CD4-positive, alpha-beta memory T cell (primary cell): ENCODE measurements at regions of chr7 and their contacts with region 1.

Region 1: DNA sequence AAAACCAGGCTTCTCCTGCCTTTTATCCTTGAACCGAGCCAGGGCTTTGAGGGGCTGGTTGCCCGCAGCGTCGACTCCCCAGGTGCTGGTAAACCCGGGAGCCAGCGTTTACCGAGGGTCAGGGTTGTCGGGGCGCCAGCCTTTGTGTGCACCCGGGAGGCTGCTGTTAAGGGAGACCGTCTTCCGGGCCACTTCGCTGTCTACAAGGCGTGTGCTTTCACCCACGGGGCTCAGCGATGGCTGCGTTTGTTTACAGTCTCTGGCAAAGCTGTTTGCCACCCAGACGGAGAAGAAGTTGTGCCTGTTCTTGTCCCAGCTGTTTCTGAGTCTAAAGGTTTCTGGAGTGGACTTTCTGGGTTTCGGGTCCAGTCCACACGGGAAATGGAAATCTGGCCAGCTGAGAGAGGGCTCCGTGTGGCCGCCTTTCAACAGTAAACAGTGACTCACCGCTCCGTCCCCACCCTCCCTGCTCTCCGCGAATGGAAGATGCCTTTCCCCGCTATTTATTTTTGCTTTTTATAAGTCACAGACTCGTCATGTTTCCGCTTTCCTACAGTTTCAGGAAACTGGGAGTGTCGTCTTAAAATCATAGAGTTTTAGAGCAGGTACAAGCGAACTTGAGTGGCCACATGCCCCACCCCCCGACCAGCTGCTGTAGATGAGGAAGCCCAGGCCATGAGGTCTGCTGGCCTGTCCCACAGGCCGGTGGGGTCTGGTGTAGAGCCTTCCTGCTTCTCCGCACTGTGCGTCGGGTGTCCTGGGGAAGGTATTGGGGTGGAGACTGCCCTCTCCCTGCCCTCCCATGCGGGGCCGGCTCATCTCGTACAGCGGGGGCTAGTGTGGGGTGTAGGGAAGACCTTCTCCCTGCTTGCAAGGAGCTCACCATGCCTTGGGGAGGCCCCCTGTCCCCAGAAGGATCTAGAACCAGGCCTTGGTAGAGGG is 2.3 kb downstream of the MAFK start:
- DNase-seq: peak; percentile 51 to 85 (median 57)
- H3K4me3 ChIP-seq: peak overlapping the region; percentile 42 to 74
- H3K4me3 Mint-ChIP-seq: peak overlapping the region; percentile 89 to 94 (median 89)
- H3K27ac ChIP-seq: peak overlapping the region; percentile 77
- H3K27ac Mint-ChIP-seq: peak overlapping the region; percentile 95 to 98 (median 96)
- H3K4me1 ChIP-seq: peaks cover 38% of the 10 kb centered on the region
- H3K4me1 Mint-ChIP-seq: peaks cover 12 to 42% (median 27%) of the 10 kb centered on the region in 4 donors
- H3K27me3 ChIP-seq: no peaks in the 10 kb centered on the region
- H3K27me3 Mint-ChIP-seq: no peaks in the 10 kb centered on the region

Region 2: DNA sequence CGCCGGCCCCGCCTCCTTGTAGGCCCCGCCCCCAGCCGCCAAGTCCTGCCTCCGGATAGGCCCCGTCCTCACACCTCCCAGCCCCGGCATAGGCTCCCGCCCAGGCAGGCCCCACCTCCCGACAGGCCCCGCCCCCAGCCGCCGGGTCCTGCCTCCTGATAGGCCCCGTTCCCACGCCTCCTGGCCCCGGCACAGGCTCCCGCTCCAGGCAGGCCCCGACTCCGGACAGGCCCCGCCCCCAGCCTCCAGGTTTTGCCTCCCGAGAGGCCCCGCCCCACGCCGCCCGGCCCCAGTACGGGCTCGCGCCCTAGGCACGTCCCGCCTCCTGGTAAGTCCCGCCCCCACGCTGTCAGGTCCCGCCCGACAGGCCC is 73.2 kb before region 1 on chr7:
- CTCF ChIA-PET with region 1: no interaction called
- POLR2A ChIA-PET with region 1: interaction called, 3 read pairs
- intact Hi-C with region 1: loop called (anchors 1 kb)
- DNase-seq: peak; percentile 98 to 99 (median 98)
- H3K4me3 ChIP-seq: peak overlapping the region in 1 of 2 donors; percentile 75
- H3K4me3 Mint-ChIP-seq: peak overlapping the region in 7 of 8 donors; percentile 62 to 81 (median 76)
- H3K27ac ChIP-seq: peak overlapping the region; percentile 34
- H3K27ac Mint-ChIP-seq: peak overlapping the region in 2 of 7 donors; percentile 35 to 63
- H3K4me1 ChIP-seq: peaks cover 28% of the 10 kb centered on the region
- H3K4me1 Mint-ChIP-seq: peaks cover 9 to 38% (median 16%) of the 10 kb centered on the region in 4 donors
- H3K27me3 ChIP-seq: no peaks in the 10 kb centered on the region
- H3K27me3 Mint-ChIP-seq: no peaks in the 10 kb centered on the region

Region 3: DNA sequence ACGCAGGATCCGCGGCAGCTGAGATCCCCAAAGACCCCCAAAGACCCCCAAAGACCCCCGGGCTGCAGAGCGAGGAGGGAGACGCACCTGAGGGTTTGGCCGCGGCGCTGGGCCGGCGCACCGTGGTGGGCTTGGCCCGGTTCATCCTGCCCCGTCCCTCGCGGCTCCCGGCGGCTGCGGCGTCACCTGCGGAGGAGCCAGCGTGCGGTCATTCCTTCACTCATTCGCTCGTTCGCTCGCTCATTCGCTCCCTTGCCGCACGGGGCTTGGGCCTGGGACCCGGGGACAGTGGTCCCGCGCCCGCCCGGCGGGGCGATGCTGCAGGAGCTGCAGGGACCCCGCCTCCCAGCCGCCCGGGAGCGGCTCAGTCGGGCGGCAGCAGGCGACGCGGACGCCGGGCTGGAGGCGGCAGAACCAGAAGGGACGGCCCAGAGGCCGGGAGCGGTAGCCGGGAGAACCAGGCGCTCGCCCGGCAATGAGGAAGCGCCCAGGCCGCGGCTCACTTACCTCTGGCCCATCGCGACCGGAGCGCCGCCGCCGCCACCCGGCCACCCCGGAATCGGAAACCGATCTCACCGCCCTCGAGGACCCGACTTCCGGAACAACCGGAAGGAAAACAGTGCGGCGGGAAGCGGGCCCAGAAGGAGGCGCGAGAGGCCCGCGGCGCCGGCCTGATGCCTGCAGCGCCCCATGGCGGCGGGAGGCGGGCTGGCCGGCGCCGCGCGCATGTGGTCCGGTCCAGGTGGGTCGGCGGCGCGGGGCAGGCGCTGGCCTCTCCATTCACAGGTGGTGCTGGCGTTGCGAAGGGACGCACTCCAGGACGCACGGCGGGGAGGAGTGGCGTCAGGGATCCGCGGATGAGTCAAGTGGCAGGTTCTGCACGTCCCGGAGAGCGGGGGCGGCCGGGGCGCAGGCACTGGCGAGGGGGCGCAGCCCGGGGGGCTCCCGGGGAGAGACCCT is 28.7 kb before region 1 on chr7 and contains the start of gene INTS1:
- CTCF ChIA-PET with region 1: interaction called, 5 read pairs
- POLR2A ChIA-PET with region 1: interaction called, 16 read pairs
- intact Hi-C with region 1: loop called (anchors 1 kb)
- DNase-seq: peak; percentile 88 to 90 (median 89)
- H3K4me3 ChIP-seq: peak within 1 kb of the TSS; percentile 57 to 89
- H3K4me3 Mint-ChIP-seq: peak within 1 kb of the TSS; percentile 83 to 92 (median 86)
- H3K27ac ChIP-seq: peak within 1 kb of the TSS; percentile 59
- H3K27ac Mint-ChIP-seq: peak within 1 kb of the TSS; percentile 68 to 87 (median 81)
- H3K4me1 ChIP-seq: peaks cover 34% of the 10 kb centered on the region
- H3K4me1 Mint-ChIP-seq: peaks cover 21 to 40% (median 33%) of the 10 kb centered on the region in 4 donors
- H3K27me3 ChIP-seq: no peaks in the 10 kb centered on the region
- H3K27me3 Mint-ChIP-seq: no peaks in the 10 kb centered on the region
- total RNA-seq, gene INTS1: 135 to 137 TPM

Region 4: GRCh38 chr7:1555809-1556540 is 23.2 kb after region 1 on chr7 and contains the start of gene TMEM184A:
- CTCF ChIA-PET with region 1: interaction called, 9 read pairs
- POLR2A ChIA-PET with region 1: interaction called, 6 read pairs
- intact Hi-C with region 1: loop called (anchors 1 kb)
- DNase-seq: peak in 4 of 5 donors; percentile 31 to 44 (median 41)
- H3K4me3 ChIP-seq: no peak within 1 kb of the TSS
- H3K4me3 Mint-ChIP-seq: no peak within 1 kb of the TSS
- H3K27ac ChIP-seq: no peak within 1 kb of the TSS
- H3K27ac Mint-ChIP-seq: peak within 1 kb of the TSS in 1 of 7 donors; percentile 17
- H3K4me1 ChIP-seq: no peaks in the 10 kb centered on the region
- H3K4me1 Mint-ChIP-seq: peaks cover 0 to 3% (median under 1%) of the 10 kb centered on the region in 4 donors
- H3K27me3 ChIP-seq: no peaks in the 10 kb centered on the region
- H3K27me3 Mint-ChIP-seq: peaks cover 0 to 1% of the 10 kb centered on the region in 2 donors
- total RNA-seq, gene TMEM184A: not detected

Region 5: GRCh38 chr7:1569833-1570633 is 37.3 kb after region 1 on chr7 and contains the start of gene PSMG3:
- CTCF ChIA-PET with region 1: no interaction called
- POLR2A ChIA-PET with region 1: interaction called, 18 read pairs
- intact Hi-C with region 1: loop called (anchors 1 kb)
- DNase-seq: peak; percentile 83 to 87 (median 85)
- H3K4me3 ChIP-seq: peak within 1 kb of the TSS; percentile 60 to 76
- H3K4me3 Mint-ChIP-seq: peak within 1 kb of the TSS; percentile 86 to 91 (median 88)
- H3K27ac ChIP-seq: peak within 1 kb of the TSS; percentile 77
- H3K27ac Mint-ChIP-seq: peak within 1 kb of the TSS; percentile 87 to 97 (median 94)
- H3K4me1 ChIP-seq: peaks cover 20% of the 10 kb centered on the region
- H3K4me1 Mint-ChIP-seq: peaks cover 11 to 40% (median 21%) of the 10 kb centered on the region in 4 donors
- H3K27me3 ChIP-seq: no peaks in the 10 kb centered on the region
- H3K27me3 Mint-ChIP-seq: no peaks in the 10 kb centered on the region
- total RNA-seq, gene PSMG3: 19.3 to 22.2 TPM